SK-N-SH (cell line): ENCODE measurements at regions of chr19 and their contacts with region 1.

Region 1: GRCh38 chr19:17576759-17577473 is 21.5 kb downstream of the COLGALT1 start:
- DNase-seq: peak; percentile 61
- H3K4me3 ChIP-seq: no peak overlapping the region
- H3K27ac ChIP-seq: no peak overlapping the region
- H3K4me1 ChIP-seq: no peaks in the 10 kb centered on the region
- H3K27me3 ChIP-seq: no peaks in the 10 kb centered on the region
- CTCF ChIP-seq: no peak
- EP300 ChIP-seq: no peak
- RAD21 ChIP-seq: no peak

Region 2: GRCh38 chr19:17522988-17523872 is 53.7 kb before region 1 on chr19:
- CTCF ChIA-PET with region 1: no interaction called
- POLR2A ChIA-PET with region 1: no interaction called
- DNase-seq: no peak
- H3K4me3 ChIP-seq: no peak overlapping the region
- H3K27ac ChIP-seq: no peak overlapping the region
- H3K4me1 ChIP-seq: no peaks in the 10 kb centered on the region
- H3K27me3 ChIP-seq: no peaks in the 10 kb centered on the region
- CTCF ChIP-seq: no peak
- EP300 ChIP-seq: no peak
- RAD21 ChIP-seq: no peak

Region 3: DNA sequence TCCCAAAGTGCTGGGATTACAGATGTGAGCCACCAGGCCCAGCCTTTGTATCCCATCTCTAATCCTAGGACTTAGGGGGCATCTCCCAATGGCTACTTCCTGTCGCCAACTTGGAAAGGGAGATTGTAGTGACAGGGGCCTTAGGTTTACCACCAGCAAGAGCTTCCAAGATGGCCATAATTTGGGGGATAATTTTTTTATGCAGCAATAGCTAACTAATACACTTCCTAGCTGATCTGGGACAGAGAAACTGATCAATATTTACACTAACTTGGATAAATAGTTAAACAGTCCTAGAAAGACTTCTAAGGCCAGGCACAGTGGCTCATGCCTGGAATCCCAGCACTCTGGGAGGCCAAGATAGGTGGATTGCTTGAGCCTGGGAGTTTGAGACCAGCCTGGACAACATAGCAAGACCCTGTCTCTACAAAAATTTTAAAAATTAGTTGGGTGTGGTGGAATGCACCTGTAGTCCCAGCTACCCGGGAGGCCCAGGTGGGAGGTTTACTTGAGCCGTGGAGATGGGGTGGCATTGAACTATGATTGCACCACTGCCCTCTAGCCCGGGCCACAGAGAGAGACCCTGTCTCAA is 26.7 kb before region 1 on chr19:
- CTCF ChIA-PET with region 1: interaction called, 14 read pairs
- POLR2A ChIA-PET with region 1: no interaction called
- DNase-seq: no peak
- H3K4me3 ChIP-seq: no peak overlapping the region
- H3K27ac ChIP-seq: no peak overlapping the region
- H3K4me1 ChIP-seq: peaks cover 0 to 4% of the 10 kb centered on the region in 2 experiments; a peak in 2 of 4 replicates
- H3K27me3 ChIP-seq: no peaks in the 10 kb centered on the region
- CTCF ChIP-seq: no peak
- EP300 ChIP-seq: no peak
- RAD21 ChIP-seq: no peak

Region 4: DNA sequence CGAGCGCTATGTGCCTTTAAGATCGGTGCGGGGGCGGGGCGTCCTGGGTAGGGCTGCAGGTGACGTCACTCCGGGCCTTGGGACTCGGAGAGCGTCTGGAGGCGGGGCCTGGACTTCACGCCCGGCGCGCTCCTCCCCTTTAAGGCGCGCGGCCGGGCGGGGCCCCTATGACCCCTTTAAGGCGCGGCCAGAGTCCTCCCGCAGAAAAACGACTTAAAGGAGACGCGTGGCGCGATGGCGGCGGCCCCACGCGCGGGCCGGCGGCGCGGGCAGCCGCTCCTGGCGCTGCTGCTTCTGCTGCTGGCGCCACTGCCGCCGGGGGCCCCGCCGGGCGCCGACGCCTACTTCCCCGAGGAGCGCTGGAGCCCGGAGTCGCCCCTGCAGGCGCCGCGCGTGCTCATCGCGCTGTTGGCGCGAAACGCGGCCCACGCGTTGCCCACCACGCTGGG is 21.4 kb before region 1 on chr19 and contains the start of gene COLGALT1:
- CTCF ChIA-PET with region 1: interaction called, 14 read pairs
- POLR2A ChIA-PET with region 1: no interaction called
- DNase-seq: peak; percentile 99
- H3K4me3 ChIP-seq: peak within 1 kb of the TSS; percentile 76 to 93
- H3K27ac ChIP-seq: peak within 1 kb of the TSS; percentile 35 to 67; a peak in 3 of 4 replicates
- H3K4me1 ChIP-seq: peaks cover 0 to 7% of the 10 kb centered on the region in 2 experiments; a peak in 2 of 4 replicates
- H3K27me3 ChIP-seq: no peaks in the 10 kb centered on the region
- CTCF ChIP-seq: no peak
- EP300 ChIP-seq: no peak
- RAD21 ChIP-seq: no peak
- polyA plus RNA-seq, gene COLGALT1: 75.9 and 83.8 TPM in 2 replicates

Region 5: DNA sequence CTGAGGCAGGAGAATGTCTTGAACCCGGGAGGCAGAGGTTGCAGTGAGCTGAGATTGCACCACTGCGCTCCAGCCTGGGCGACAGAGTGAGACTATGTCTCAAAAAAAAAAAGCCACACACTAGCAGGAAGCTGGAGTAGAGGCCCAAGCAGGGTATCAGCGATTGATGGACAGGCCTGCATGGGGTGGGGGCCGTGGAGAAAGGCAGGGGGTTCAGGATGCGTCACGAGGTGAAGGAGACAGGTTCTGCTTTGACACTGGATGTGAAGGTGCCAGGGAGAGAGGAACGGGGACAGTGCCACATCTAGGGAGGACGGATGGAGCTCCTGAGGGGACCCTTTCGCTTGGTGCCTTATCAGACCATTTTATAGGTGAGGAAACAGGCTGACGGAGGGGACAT is 14.4 kb before region 1 on chr19:
- CTCF ChIA-PET with region 1: interaction called, 14 read pairs
- POLR2A ChIA-PET with region 1: interaction called, 5 read pairs
- DNase-seq: no peak
- H3K4me3 ChIP-seq: no peak overlapping the region
- H3K27ac ChIP-seq: no peak overlapping the region
- H3K4me1 ChIP-seq: no peaks in the 10 kb centered on the region
- H3K27me3 ChIP-seq: no peaks in the 10 kb centered on the region
- CTCF ChIP-seq: no peak
- EP300 ChIP-seq: no peak
- RAD21 ChIP-seq: no peak